ENCODE measurements at regions of chr15 and their contacts with region 1.

Region 1: GRCh38 chr15:40301467-40302179 is 6.1 kb downstream of the PLCB2 start:
- DNase-seq: peak; percentile 62 to 69 (median 64)
- ATAC-seq: peak; percentile 81
- H3K4me3 ChIP-seq: no peak overlapping the region
- H3K27ac ChIP-seq: peak overlapping the region; percentile 18
- H3K4me1 ChIP-seq: peaks cover 19 to 30% of the 10 kb centered on the region in 2 experiments; a peak in 4 of 5 replicates
- H3K27me3 ChIP-seq: no peaks in the 10 kb centered on the region
- CTCF ChIP-seq: no peak
- EP300 ChIP-seq: no peak
- POLR2A ChIP-seq: no peak
- RAD21 ChIP-seq: no peak

Region 2: DNA sequence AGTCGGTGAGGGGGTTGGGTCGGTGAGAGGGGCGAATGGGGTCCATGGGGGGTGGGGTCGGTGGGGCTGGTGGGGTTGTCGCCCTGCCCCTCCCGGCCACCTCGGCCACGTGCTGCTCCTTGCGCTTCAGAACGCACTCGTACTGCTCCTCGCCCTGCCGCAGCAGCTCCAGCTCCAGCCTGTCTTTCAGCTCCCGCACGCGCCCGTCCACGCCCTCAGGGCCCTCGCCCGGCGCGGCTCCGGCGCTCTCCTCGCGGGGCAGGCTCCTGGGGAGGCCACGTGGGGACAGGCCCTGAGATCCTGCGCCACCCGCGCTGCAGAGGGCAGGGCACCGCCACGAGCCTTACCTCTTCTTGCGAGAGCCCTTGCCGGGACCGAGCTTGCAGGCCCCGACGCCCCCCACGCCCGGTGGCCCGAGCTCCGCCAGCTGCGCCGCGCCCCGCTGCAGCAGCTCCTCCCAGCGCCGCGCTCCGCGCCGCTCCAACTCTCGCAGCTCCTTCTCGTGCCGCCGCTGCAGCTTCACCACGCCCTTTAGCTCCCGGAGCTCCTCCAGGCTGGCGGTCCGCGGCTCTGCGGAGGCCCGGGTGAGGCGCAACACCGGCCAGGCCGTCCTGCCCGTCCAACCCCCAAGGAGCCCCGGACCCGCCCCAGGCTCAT is 10.6 kb before region 1 on chr15:
- CTCF ChIA-PET with region 1: no interaction called
- POLR2A ChIA-PET with region 1: interaction called, 13 read pairs
- in situ Hi-C with region 1: no loop called
- intact Hi-C with region 1: no loop called
- DNase-seq: peak; percentile 61 to 77 (median 75)
- ATAC-seq: peak; percentile 89
- H3K4me3 ChIP-seq: peak overlapping the region; percentile 21; the same call in 1 of the 2 replicates
- H3K27ac ChIP-seq: no peak overlapping the region
- H3K4me1 ChIP-seq: peaks cover 0 to 25% of the 10 kb centered on the region in 2 experiments; a peak in 3 of 5 replicates
- H3K27me3 ChIP-seq: peaks cover 3 to 40% of the 10 kb centered on the region in 2 experiments; a peak in 4 of 5 replicates
- CTCF ChIP-seq: no peak
- EP300 ChIP-seq: no peak
- POLR2A ChIP-seq: 0 out of 2 replicates have a peak, but pooled peaks have one; percentile 29
- RAD21 ChIP-seq: no peak

Measured in K562 (cell line).